Natural killer cell (primary cell): ENCODE measurements at regions of chr2 and their contacts with region 1.

Region 1: DNA sequence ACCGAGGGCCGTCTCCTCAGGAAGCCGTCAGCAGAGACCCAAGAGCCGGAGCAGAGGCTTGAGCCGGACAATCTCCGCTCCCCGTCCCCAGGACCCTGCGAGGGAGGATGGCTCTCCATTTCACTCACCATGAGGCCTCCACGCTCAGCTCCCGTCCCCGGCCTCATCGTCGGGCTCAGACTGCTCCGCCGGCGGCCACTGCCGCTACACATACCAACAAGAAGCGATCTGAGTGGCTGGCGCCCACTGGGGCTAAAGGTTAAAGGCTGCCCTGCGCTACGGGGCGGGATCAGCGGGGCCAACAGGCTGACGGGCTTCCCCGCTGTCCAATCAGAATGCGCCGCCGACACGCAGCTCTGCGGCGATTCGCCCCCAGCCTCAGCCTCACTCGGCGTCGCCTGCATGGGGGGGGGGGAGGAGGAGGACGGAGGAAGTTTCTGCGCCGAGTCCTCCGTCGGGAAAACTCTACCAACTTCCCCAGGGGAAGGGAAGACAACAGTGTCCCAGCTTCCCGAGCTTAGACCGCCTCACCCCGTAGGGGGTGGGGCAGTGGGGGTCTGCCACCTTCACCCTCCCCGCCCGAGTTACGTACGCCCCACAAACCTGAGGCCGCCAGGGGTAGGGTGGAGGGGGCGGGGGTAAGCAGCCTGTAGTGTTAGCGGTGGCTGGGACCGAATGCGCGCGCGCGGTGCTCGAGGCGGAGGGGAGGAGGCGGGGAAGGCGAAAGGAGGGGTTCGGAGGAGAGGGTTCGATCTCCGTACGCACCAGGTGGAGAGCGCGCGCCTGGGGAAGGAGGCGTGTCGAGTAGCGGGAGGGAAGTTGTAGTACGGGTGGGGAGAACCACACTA is at the start of gene PRPF40A:
- DNase-seq: peak; percentile 99
- ATAC-seq: peak; percentile 75 to 90 (median 78)
- H3K4me3 ChIP-seq: peak within 1 kb of the TSS; percentile 86
- H3K4me3 Mint-ChIP-seq: peak within 1 kb of the TSS; percentile 94
- H3K27ac ChIP-seq: peak within 1 kb of the TSS; percentile 94
- H3K27ac Mint-ChIP-seq: peak within 1 kb of the TSS; percentile 96 to 98
- H3K4me1 ChIP-seq: peaks cover 9% of the 10 kb centered on the region
- H3K4me1 Mint-ChIP-seq: peaks cover 61 to 64% of the 10 kb centered on the region in 2 donors
- H3K27me3 ChIP-seq: no peaks in the 10 kb centered on the region
- H3K27me3 Mint-ChIP-seq: peaks cover 0 to 2% of the 10 kb centered on the region in 2 donors
- CTCF ChIP-seq: no peak
- total RNA-seq, gene PRPF40A: 120 to 137 (median 130) TPM

Region 2: GRCh38 chr2:151828143-151828889 is 889.1 kb before region 1 on chr2 and contains the start of gene ARL5A:
- intact Hi-C with region 1: loop called (anchors 5 kb)
- DNase-seq: peak; percentile 98
- ATAC-seq: peak; percentile 92 to 98 (median 93)
- H3K4me3 ChIP-seq: peak within 1 kb of the TSS; percentile 82
- H3K4me3 Mint-ChIP-seq: peak within 1 kb of the TSS; percentile 96
- H3K27ac ChIP-seq: peak within 1 kb of the TSS; percentile 78
- H3K27ac Mint-ChIP-seq: peak within 1 kb of the TSS; percentile 95 to 96
- H3K4me1 ChIP-seq: peaks cover 15% of the 10 kb centered on the region
- H3K4me1 Mint-ChIP-seq: peaks cover 52 to 54% of the 10 kb centered on the region in 2 donors
- H3K27me3 ChIP-seq: no peaks in the 10 kb centered on the region
- H3K27me3 Mint-ChIP-seq: no peaks in the 10 kb centered on the region
- CTCF ChIP-seq: no peak
- total RNA-seq, gene ARL5A: 39.9 to 58.0 (median 56.5) TPM

Region 3: GRCh38 chr2:152175458-152176325 is 541.8 kb before region 1 on chr2 and contains the start of gene STAM2:
- intact Hi-C with region 1: loop called (anchors 5 kb)
- DNase-seq: peak; percentile 92 to 94
- ATAC-seq: peak; percentile 87 to 95 (median 88)
- H3K4me3 ChIP-seq: peak within 1 kb of the TSS; percentile 82
- H3K4me3 Mint-ChIP-seq: peak within 1 kb of the TSS; percentile 99
- H3K27ac ChIP-seq: peak within 1 kb of the TSS; percentile 94
- H3K27ac Mint-ChIP-seq: peak within 1 kb of the TSS; percentile 99 to 100
- H3K4me1 ChIP-seq: peaks cover 13% of the 10 kb centered on the region
- H3K4me1 Mint-ChIP-seq: peaks cover 43 to 48% of the 10 kb centered on the region in 2 donors
- H3K27me3 ChIP-seq: no peaks in the 10 kb centered on the region
- H3K27me3 Mint-ChIP-seq: peaks cover 9 to 12% of the 10 kb centered on the region in 2 donors
- CTCF ChIP-seq: peak; percentile 95
- total RNA-seq, gene STAM2: 18.7 to 23.1 (median 19.2) TPM

Region 4: GRCh38 chr2:152525277-152525838 is 192.1 kb before region 1 on chr2:
- intact Hi-C with region 1: no loop called
- DNase-seq: no peak
- ATAC-seq: peak; percentile 44 to 69 (median 50)
- H3K4me3 ChIP-seq: no peak overlapping the region
- H3K4me3 Mint-ChIP-seq: no peak overlapping the region
- H3K27ac ChIP-seq: no peak overlapping the region
- H3K27ac Mint-ChIP-seq: peak overlapping the region in 1 of 2 donors; percentile 29
- H3K4me1 ChIP-seq: no peaks in the 10 kb centered on the region
- H3K4me1 Mint-ChIP-seq: peaks cover 7% of the 10 kb centered on the region in 2 donors
- H3K27me3 ChIP-seq: no peaks in the 10 kb centered on the region
- H3K27me3 Mint-ChIP-seq: peaks cover 0 to 11% of the 10 kb centered on the region in 2 donors
- CTCF ChIP-seq: no peak

Region 5: DNA sequence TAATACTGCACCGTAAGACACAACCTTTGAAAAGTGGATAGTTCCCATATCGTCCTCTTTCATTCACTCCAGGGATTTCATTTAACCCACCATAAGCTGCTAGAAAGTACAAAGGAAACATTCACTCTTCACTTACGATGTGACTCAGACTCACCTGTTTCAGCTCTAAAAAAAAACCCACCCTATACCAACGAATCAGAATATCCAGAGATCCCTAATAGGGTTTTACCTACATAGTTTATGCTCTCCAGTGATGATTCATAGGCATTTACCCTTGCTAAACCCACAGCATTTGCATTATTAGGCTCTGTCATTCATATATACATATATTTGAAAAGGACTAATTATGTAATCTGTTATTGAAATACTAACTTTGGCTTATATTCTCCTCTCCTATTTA is 60.4 kb before region 1 on chr2:
- intact Hi-C with region 1: no loop called
- DNase-seq: no peak
- ATAC-seq: no peak
- H3K4me3 ChIP-seq: no peak overlapping the region
- H3K4me3 Mint-ChIP-seq: no peak overlapping the region
- H3K27ac ChIP-seq: no peak overlapping the region
- H3K27ac Mint-ChIP-seq: no peak overlapping the region
- H3K4me1 ChIP-seq: no peaks in the 10 kb centered on the region
- H3K4me1 Mint-ChIP-seq: no peaks in the 10 kb centered on the region
- H3K27me3 ChIP-seq: no peaks in the 10 kb centered on the region
- H3K27me3 Mint-ChIP-seq: no peaks in the 10 kb centered on the region
- CTCF ChIP-seq: no peak

Region 6: GRCh38 chr2:152694161-152694661 is 23.2 kb before region 1 on chr2:
- intact Hi-C with region 1: loop called (anchors 1 kb)
- DNase-seq: peak; percentile 31 to 58
- ATAC-seq: peak; percentile 88 to 92 (median 88)
- H3K4me3 ChIP-seq: peak overlapping the region; percentile 2
- H3K4me3 Mint-ChIP-seq: peak overlapping the region; percentile 83
- H3K27ac ChIP-seq: peak overlapping the region; percentile 76
- H3K27ac Mint-ChIP-seq: peak overlapping the region; percentile 92 to 93
- H3K4me1 ChIP-seq: peaks cover 3% of the 10 kb centered on the region
- H3K4me1 Mint-ChIP-seq: peaks cover 6 to 21% of the 10 kb centered on the region in 2 donors
- H3K27me3 ChIP-seq: no peaks in the 10 kb centered on the region
- H3K27me3 Mint-ChIP-seq: no peaks in the 10 kb centered on the region
- CTCF ChIP-seq: no peak

Region 7: DNA sequence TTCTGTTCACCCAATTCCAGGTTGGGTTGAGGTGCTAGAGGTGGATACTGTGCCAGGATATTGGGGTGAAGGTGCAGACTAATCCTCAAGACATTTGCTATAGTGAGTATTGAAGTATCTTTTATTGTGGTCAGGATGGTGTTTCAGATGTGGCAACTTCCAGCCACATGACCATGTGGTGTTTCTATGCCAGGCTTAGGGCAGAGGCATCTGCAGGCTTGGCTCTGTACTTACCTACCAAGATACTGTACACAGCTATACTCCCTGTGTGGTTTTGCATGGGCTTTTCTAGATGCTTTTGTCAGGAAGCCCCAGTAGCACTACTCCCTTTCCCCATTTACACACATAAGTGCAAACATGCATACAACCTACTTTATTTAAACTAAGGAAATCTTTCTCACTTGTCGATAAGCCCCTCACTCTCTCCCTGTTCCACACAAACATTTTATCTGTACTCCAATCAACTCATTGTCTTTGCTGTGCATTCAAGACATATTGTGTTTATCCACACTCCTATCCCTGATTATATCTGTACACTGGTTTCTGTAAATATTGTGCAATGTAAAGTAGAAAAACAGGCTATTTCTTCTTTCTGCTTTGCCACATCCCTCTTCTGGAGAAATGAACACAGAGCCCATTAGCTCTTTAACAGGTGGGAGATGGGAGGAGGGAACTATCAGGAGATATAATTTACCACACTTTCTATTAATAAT is 13.3 kb after region 1 on chr2:
- intact Hi-C with region 1: loop called (anchors 1 kb)
- DNase-seq: peak; percentile 52 to 82
- ATAC-seq: peak; percentile 90 to 97 (median 93)
- H3K4me3 ChIP-seq: no peak overlapping the region
- H3K4me3 Mint-ChIP-seq: peak overlapping the region; percentile 63
- H3K27ac ChIP-seq: peak overlapping the region; percentile 24
- H3K27ac Mint-ChIP-seq: peak overlapping the region; percentile 67 to 87
- H3K4me1 ChIP-seq: peaks cover 8% of the 10 kb centered on the region
- H3K4me1 Mint-ChIP-seq: peaks cover 23% of the 10 kb centered on the region in 2 donors
- H3K27me3 ChIP-seq: no peaks in the 10 kb centered on the region
- H3K27me3 Mint-ChIP-seq: no peaks in the 10 kb centered on the region
- CTCF ChIP-seq: no peak